ENCODE measurements at regions of chr7 and their contacts with region 1.

Region 1: DNA sequence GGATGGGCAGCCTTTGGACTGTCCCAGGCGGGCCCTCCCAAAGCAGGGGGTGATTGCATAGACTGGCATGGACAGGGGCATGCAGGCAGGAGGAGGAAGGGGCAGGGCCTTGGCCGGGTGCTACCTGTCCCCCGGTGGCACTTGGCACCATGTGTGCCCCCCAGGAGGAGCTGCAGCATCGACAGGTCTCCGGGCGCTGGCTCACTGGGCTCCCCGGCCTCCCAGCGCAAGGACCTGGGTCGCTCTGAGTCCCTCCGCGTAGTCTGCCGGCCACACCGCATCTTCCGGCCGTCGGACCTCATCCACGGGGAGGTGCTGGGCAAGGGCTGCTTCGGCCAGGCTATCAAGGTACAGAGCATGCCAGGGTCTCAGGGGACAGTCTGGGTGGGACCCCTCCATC is 23.2 kb downstream of the LIMK1 start:
- DNase-seq: no peak
- ATAC-seq: no peak
- H3K4me3 ChIP-seq: no peak overlapping the region
- H3K4me3 Mint-ChIP-seq: no peak overlapping the region
- H3K27ac ChIP-seq: no peak overlapping the region
- H3K27ac Mint-ChIP-seq: no peak overlapping the region
- H3K4me1 ChIP-seq: no peaks in the 10 kb centered on the region
- H3K4me1 Mint-ChIP-seq: no peaks in the 10 kb centered on the region
- H3K27me3 ChIP-seq: no peaks in the 10 kb centered on the region
- H3K27me3 Mint-ChIP-seq: no peaks in the 10 kb centered on the region

Region 2: DNA sequence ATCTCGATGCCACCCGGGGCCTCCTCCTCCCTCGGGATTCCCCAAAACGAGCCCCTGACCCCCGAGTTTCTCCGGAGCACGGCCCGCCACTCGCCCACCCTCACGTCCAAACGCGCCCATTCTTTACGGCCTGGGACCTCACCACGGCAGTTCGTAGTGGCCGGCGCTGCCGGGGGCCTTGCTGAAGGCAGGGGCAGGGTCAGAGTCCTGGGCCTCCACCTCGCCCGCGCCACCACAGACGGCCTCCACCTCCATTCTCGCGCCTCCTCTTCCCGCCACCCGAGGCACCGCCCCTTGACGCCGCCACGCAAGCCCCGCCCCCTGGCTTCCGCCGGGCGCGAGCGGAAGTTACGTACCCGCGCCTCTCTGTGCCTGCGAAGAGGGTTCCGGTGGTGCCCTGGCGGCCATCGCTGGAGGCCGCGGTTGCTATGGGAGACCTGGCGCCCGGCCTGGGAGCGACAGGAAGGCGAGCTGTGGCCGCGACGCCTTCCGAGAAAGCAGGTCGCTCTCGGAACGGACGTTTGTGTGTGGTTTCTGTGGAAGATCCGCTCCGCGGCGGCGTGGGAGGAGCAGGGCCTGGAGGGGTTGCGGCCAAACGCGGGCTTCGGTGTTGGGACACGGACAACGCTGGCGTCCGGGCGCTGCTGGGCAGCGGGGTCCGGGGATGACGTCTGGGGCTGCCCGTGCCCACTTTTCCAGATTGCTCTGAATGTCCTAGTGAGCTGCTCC is 147.4 kb after region 1 on chr7 and contains the start of gene RFC2:
- CTCF ChIA-PET with region 1: no interaction called
- POLR2A ChIA-PET with region 1: interaction called in 1 of 2 experiments, 11 read pairs
- DNase-seq: peak; percentile 88 to 99 (median 94)
- ATAC-seq: peak; percentile 97 to 98 (median 97)
- H3K4me3 ChIP-seq: peak within 1 kb of the TSS; percentile 89 to 91
- H3K4me3 Mint-ChIP-seq: peak within 1 kb of the TSS; percentile 91 to 93 (median 93)
- H3K27ac ChIP-seq: peak within 1 kb of the TSS; percentile 80
- H3K27ac Mint-ChIP-seq: peak within 1 kb of the TSS; percentile 92
- H3K4me1 ChIP-seq: peaks cover 8 to 24% of the 10 kb centered on the region in 2 experiments
- H3K4me1 Mint-ChIP-seq: peaks cover 25 to 30% (median 28%) of the 10 kb centered on the region in 3 donors
- H3K27me3 ChIP-seq: no peaks in the 10 kb centered on the region
- H3K27me3 Mint-ChIP-seq: no peaks in the 10 kb centered on the region
- total RNA-seq, gene RFC2: 13.3 to 17.6 (median 14.8) TPM

Measured in T-cell (primary cell).